Ovary (tissue), 10 donors: ENCODE measurements at regions of chr6 and their contacts with region 1.

Region 1: GRCh38 chr6:13336553-13336952 is 8.2 kb upstream of the TBC1D7 start:
- DNase-seq: peak in 4 of 5 donors; percentile 62 to 87 (median 70)
- H3K4me3 ChIP-seq: no peak overlapping the region
- H3K27ac ChIP-seq: no peak overlapping the region
- H3K4me1 ChIP-seq: no peaks in the 10 kb centered on the region
- H3K27me3 ChIP-seq: no peaks in the 10 kb centered on the region
- CTCF ChIP-seq: peak; percentile 38 to 70 (median 64)
- EP300 ChIP-seq: no peak
- POLR2A ChIP-seq: no peak

Region 2: DNA sequence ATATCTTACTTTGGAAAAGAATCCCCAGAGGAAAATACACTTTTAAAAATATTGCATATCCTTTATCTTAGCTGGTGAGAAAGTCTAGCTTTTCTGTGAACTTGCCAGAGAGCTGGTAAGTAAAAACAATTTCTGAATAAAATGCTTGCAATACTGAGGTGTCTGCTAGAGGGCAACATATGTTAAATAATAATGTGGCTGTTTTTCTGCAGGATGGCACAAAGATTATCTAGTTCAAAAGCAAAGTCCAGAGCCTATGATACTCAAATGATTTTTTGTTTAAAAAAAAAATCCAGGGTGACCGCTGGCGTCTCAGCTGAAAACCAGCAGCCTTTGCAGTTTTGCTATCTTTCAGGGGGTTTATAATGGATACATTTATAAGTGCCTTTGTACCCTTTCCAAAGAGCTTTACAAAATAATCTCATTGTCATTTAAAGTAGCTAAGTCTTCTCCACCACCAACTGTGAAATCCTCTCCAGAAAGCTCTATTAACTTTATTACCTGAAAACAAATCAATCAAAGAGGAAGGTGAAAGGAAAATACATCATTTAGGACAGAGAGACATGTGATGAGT is 425.1 kb before region 1 on chr6:
- intact Hi-C with region 1: loop called in 2 of 4 experiments (anchors 2 to 10 kb)
- DNase-seq: no peak
- H3K4me3 ChIP-seq: no peak overlapping the region
- H3K27ac ChIP-seq: no peak overlapping the region
- H3K4me1 ChIP-seq: no peaks in the 10 kb centered on the region
- H3K27me3 ChIP-seq: no peaks in the 10 kb centered on the region
- CTCF ChIP-seq: peak in 1 of 3 donors; percentile 31
- EP300 ChIP-seq: no peak
- POLR2A ChIP-seq: no peak

Region 3: GRCh38 chr6:13538084-13538483 is 201.5 kb after region 1 on chr6:
- intact Hi-C with region 1: loop called in 2 of 4 experiments (anchors 5 to 10 kb)
- DNase-seq: no peak
- H3K4me3 ChIP-seq: no peak overlapping the region
- H3K27ac ChIP-seq: no peak overlapping the region
- H3K4me1 ChIP-seq: no peaks in the 10 kb centered on the region
- H3K27me3 ChIP-seq: no peaks in the 10 kb centered on the region
- CTCF ChIP-seq: no peak
- EP300 ChIP-seq: no peak
- POLR2A ChIP-seq: no peak

Region 4: GRCh38 chr6:13548500-13549210 is 212.1 kb after region 1 on chr6:
- intact Hi-C with region 1: loop called in 1 of 4 experiments (anchors 10 kb)
- DNase-seq: no peak
- H3K4me3 ChIP-seq: no peak overlapping the region
- H3K27ac ChIP-seq: no peak overlapping the region
- H3K4me1 ChIP-seq: no peaks in the 10 kb centered on the region
- H3K27me3 ChIP-seq: no peaks in the 10 kb centered on the region
- CTCF ChIP-seq: no peak
- EP300 ChIP-seq: no peak
- POLR2A ChIP-seq: no peak

Region 5: GRCh38 chr6:14784596-14785492 is 1448.3 kb after region 1 on chr6:
- intact Hi-C with region 1: no loop called
- DNase-seq: no peak
- H3K4me3 ChIP-seq: no peak overlapping the region
- H3K27ac ChIP-seq: no peak overlapping the region
- H3K4me1 ChIP-seq: no peaks in the 10 kb centered on the region
- H3K27me3 ChIP-seq: no peaks in the 10 kb centered on the region
- CTCF ChIP-seq: no peak
- EP300 ChIP-seq: no peak
- POLR2A ChIP-seq: no peak